ENCODE measurements at regions of chr13 and their contacts with region 1.

Region 1: DNA sequence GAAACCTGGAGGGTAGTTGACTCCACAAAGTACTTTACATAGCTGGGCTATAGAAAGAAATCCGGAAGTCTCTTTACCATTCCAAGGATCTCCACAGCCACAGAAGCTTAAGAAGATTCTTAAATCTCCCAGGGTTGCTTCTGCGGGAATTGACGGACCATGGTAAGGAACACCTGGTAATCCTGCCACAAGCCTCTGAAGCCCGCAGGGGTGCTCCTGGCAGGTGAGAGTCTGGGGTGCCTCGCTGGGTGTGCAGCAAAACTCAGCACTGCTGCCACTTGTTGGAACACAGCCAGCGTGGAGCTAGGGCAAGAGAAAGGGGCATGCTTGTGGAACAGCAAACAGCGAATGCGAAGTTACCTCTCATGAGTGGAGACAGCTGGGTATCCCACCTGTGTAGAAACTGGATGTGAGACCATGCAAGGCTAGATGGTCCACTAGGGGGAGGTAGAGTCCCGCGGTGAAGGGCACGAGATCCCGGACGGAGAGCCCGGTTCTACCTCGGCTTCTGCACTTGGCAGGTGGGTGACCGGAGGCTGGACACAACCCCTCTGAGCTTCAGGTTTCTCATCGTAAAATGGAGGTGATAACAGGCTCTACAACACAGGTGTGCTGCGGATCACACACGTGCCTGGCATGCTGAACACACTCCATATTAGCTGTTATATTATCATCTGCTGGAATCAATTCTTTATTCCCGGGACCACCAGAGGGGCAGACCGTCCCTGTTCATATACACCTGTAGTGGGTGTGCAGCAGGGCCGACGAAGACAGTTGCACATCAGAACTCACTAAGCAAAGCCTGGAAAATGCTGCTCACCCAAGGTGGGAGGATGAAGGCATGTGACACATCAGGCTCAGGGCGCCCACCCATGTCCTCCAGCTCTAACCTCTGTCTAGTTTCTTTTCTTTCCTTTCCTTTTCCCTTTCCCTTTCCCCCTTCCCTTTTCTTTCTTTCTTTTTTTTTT is 24.1 kb upstream of the UBAC2 start:
- DNase-seq: peak; percentile 52 to 83
- ATAC-seq: peak; percentile 94

Region 2: GRCh38 chr13:99269627-99270241 is 93.1 kb after region 1 on chr13:
- intact Hi-C with region 1: loop called in 1 of 2 experiments (anchors 5 kb)
- DNase-seq: no peak
- ATAC-seq: peak; percentile 73

Region 3: DNA sequence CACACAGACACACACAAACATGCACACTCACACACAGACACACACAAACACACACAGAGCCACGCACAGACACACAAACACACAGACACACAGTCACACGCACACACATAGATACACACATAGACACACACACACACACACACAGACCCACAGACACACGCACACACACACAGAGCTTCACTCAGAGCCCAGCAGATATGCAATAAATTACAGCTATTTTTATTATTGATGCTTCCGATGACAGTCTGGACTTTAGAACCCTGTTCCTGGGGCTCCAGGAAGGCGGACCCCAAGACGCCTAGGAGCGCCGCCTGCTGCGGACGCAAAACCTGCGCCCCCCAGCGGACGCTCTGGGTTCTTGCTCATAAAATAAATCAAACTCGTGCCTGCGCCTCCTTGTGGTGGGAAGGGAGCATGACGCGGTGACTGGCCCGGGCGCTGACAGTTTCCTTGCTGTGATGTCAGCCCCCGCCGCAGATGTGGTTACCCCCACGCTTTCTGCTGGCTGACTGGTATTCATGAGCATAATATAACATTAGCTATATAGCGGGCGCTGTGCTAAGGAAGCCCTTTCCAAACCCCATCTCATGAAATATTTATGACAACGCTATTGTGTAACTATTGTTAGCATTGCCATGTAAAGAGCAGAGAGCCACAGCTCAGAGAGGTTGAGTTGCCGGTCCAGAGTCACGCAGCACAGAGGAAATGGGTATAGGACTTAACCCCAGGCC is 260.3 kb after region 1 on chr13:
- intact Hi-C with region 1: loop called (anchors 5 to 10 kb)
- DNase-seq: peak; percentile 66 to 92
- ATAC-seq: peak; percentile 81

Region 4: DNA sequence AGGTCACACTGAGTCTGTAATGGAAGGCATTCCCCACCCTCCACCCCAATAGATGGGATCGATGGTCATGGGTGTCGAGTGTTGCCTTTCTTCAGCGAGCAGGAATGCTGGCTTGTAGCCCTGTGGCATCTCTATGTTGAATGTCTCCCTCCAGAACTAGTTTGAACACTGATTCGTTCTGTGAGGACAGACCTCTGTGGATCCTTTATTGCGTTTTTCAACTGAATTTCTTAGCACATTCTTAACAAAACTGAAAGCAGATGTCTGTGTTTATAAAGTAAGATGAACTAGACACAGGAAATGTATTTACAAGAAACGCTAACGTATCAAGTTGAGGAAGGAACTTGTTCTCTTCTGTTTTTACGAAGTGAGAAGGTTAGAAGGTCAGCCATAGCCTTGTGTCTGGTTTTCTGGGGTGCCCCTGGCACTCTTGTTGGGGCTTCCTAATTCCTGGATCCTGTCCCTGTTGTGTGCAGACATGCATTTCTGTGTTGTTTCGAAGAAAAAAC is 287.9 kb after region 1 on chr13:
- intact Hi-C with region 1: no loop called
- DNase-seq: no peak
- ATAC-seq: no peak